Natural killer cell (primary cell): ENCODE measurements at regions of chr6 and their contacts with region 1.

Region 1: DNA sequence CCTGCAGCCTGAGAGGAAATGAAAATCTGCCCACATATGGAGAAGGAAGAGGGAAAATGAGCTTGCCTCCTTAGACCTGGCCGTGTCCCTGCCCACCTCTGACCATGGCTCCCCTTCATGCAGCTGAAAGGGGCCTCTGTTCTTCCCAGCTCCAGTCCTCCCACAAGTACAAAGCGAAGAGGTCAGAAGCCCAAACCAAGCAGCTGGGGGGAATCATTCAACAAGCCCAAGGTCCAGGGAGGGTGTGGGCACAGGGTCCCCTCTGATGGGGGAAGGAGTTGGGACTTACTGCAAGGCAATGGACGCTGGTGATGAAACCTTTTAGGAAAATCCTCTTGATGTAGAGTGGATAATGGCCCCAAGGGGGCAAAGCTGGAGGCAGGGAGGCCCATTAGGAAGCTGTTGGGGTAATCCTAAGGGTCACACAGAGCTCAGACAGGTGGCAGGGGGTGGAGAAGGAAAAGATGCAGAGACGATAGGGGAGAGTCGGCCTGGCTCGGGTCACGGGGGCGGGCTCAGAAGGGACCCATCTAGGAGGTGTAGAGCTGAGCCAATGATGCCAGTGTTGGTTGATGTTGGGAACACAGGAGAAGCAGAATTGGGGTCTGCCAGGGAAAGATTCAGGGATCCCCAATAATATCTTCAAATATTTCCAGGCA is 16.1 kb upstream of the GRM4 start:
- DNase-seq: no peak
- ATAC-seq: no peak
- H3K4me3 ChIP-seq: no peak overlapping the region
- H3K4me3 Mint-ChIP-seq: no peak overlapping the region
- H3K27ac ChIP-seq: no peak overlapping the region
- H3K27ac Mint-ChIP-seq: no peak overlapping the region
- H3K4me1 ChIP-seq: peaks cover 5% of the 10 kb centered on the region
- H3K4me1 Mint-ChIP-seq: peaks cover 0 to 4% of the 10 kb centered on the region in 2 donors
- H3K27me3 ChIP-seq: peaks cover 2% of the 10 kb centered on the region
- H3K27me3 Mint-ChIP-seq: peaks cover 23 to 42% of the 10 kb centered on the region in 2 donors
- CTCF ChIP-seq: no peak

Region 2: DNA sequence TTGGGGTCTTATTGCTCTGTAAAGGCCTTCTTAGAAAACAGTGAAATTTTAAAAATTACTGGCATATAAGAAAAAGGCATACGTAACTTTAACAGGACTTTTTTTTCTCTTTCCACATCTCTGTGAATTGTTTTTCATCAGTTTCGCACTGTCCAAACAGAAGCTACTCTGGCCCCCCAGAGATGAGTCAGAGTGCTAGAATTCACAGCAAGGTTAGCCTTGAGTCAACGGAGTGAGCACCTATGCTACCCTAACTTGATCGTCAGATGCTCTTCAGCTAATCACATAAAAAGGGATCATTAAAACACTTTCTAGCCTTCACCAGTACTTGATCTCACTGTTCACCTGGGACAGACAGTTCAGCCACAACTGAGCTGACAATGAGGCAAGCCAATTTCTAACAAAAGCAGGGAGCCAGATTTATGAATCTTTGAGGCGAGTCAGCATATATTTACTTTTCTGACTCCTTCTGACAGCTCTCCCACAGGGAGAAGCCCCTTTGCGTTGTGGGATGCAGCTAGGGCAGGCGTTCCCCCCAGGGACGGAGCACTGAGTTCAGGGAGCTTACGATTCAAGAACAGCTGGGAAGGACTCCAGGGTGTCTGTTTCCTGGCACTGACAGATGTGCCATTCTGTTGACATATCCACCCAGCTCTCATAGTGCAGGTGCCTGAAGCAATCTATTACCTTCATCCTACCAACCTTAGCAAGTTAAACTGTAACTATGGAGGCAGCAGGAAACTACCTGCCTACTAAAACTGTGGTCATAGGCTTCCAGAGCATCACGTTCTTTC is 440.5 kb after region 1 on chr6:
- intact Hi-C with region 1: loop called (anchors 10 kb)
- DNase-seq: no peak
- ATAC-seq: no peak
- H3K4me3 ChIP-seq: no peak overlapping the region
- H3K4me3 Mint-ChIP-seq: no peak overlapping the region
- H3K27ac ChIP-seq: no peak overlapping the region
- H3K27ac Mint-ChIP-seq: no peak overlapping the region
- H3K4me1 ChIP-seq: peaks cover 12% of the 10 kb centered on the region
- H3K4me1 Mint-ChIP-seq: peaks cover 37 to 56% of the 10 kb centered on the region in 2 donors
- H3K27me3 ChIP-seq: no peaks in the 10 kb centered on the region
- H3K27me3 Mint-ChIP-seq: no peaks in the 10 kb centered on the region
- CTCF ChIP-seq: no peak

Region 3: DNA sequence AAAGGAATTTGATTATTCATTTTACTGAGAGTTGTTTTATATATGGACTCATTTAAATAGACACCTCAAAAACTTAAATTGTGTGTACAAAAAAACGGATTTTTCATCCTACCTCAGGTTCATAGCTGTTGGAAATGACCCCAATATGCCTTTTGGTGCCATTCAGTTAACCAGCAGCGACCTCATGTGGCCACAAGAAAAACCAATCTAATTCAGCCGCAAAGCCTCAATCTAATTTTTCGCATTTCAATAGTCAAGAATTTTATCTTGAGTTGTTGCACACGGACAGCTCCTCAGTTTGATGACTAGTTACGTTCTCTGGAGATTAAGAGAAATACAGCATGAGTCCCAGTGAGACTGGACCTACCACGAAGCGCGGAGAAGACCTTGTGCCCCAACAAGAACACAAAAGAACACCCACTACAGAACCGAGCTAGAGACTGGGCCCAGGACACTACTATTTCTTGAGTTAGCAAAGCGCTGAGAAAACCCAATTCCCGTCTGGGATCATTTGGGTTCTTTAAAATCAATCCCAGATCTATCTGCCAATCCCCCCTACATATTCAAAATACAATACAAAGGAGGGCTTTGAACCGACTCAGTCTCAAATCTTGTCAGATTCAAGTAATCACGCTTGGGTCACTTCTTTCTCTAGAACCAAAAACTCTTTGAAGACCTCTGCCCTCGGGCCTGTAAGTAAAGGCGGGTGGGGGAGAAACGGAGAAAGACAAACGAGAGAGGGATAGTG is 978.1 kb after region 1 on chr6:
- intact Hi-C with region 1: loop called (anchors 5 kb)
- DNase-seq: peak; percentile 24 to 83
- ATAC-seq: peak in 2 of 3 donors; percentile 36 to 57
- H3K4me3 ChIP-seq: no peak overlapping the region
- H3K4me3 Mint-ChIP-seq: peak overlapping the region; percentile 71
- H3K27ac ChIP-seq: no peak overlapping the region
- H3K27ac Mint-ChIP-seq: peak overlapping the region in 1 of 2 donors; percentile 83
- H3K4me1 ChIP-seq: peaks cover 11% of the 10 kb centered on the region
- H3K4me1 Mint-ChIP-seq: peaks cover 11 to 17% of the 10 kb centered on the region in 2 donors
- H3K27me3 ChIP-seq: peaks cover 2% of the 10 kb centered on the region
- H3K27me3 Mint-ChIP-seq: peaks cover 14 to 27% of the 10 kb centered on the region in 2 donors
- CTCF ChIP-seq: peak; percentile 87